ENCODE measurements at regions of chr14 and their contacts with region 1.

Region 1: DNA sequence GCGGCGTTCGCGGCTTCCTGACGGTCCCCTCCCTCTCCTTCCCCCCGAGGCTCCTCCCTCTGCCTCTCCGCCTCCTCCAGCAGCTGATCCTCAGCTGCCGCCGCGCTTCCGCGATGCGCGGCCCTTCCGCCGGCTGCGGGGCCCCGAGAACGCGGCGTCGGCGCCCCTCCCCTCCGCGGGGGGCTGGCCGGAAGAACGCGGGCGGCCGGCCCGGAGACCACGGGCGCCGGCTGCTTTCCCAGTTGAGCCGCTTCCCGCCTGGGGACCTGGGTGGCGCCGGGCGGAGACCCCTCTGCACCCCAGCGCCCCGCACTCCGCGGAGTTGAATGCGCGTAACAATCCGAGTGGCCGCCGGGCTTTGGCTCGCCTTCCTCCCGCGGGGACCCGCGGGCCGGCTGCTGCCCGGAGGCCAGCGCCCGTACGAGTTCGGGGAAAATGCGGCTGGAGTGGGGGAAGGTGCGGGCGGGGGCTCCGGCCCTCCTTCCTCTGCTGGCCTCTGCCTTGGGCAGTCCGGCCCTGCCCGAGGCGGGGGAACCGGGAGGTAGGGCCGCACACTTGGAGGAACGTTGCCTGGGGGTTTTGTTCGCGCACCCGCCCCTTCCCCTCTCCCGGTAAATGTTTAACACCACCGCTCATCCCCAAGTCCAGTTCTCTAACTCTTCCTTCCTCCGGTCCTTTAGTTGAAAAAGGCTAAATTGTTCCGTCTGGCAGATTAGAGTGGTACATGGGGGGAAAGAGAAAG is 383 bp upstream of the DCAF5 start:
- DNase-seq: peak; percentile 89 to 96 (median 92)
- H3K4me3 ChIP-seq: peak overlapping the region; percentile 94
- H3K4me3 Mint-ChIP-seq: peak overlapping the region; percentile 93 to 98 (median 96)
- H3K27ac ChIP-seq: peak overlapping the region; percentile 41
- H3K27ac Mint-ChIP-seq: peak overlapping the region; percentile 68 to 98 (median 94)
- H3K4me1 ChIP-seq: peaks cover 29% of the 10 kb centered on the region
- H3K4me1 Mint-ChIP-seq: peaks cover 33 to 41% (median 36%) of the 10 kb centered on the region in 3 donors
- H3K27me3 ChIP-seq: no peaks in the 10 kb centered on the region
- H3K27me3 Mint-ChIP-seq: no peaks in the 10 kb centered on the region

Region 2: GRCh38 chr14:69129264-69129880 is 23.9 kb before region 1 on chr14:
- CTCF ChIA-PET with region 1: interaction called, 10 read pairs
- POLR2A ChIA-PET with region 1: interaction called, 4 read pairs
- DNase-seq: peak; percentile 53 to 81 (median 55)
- H3K4me3 ChIP-seq: no peak overlapping the region
- H3K4me3 Mint-ChIP-seq: peak overlapping the region in 1 of 7 donors; percentile 10
- H3K27ac ChIP-seq: no peak overlapping the region
- H3K27ac Mint-ChIP-seq: peak overlapping the region; percentile 7 to 87 (median 74)
- H3K4me1 ChIP-seq: peaks cover 29% of the 10 kb centered on the region
- H3K4me1 Mint-ChIP-seq: peaks cover 65 to 93% (median 89%) of the 10 kb centered on the region in 3 donors
- H3K27me3 ChIP-seq: no peaks in the 10 kb centered on the region
- H3K27me3 Mint-ChIP-seq: no peaks in the 10 kb centered on the region

Region 3: DNA sequence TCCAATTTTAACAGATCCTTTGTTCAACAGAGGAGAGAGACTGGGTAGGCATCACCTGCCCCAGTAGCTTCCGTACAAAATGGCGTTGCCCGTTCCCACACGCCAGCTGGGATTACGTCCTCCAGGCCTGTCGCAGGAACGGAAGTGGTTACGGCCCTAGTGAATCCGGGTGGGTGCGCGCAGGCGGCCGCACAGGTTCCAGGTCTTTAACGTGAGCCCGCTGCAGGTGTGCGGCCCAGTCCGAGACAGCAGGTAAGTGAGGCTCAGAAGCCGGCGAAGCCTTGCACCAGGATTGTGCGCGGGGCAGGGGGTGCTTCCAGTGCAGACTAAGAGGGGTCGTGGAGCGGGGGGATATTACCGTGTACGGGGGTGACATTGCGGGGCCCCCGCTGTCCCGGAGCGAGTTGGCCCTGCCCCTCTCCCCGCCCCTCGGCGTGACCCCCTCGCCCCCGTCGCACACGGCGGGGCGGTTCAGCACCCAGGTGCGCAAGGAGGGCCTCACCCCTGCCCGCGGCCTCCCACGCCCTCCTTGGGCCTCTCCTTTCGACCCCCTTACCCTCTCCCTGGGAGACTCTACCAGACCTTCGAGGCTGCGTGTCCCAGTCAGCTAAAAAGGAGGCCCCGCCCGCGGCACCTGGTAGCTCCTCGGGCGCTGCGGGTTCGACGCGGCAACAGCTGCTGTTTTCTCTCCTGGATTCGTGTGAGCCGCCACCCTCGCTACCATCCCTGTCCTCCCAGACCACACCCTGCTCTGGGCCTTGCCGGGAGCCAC is 38.2 kb after region 1 on chr14 and contains the start of gene EXD2:
- CTCF ChIA-PET with region 1: interaction called, 15 read pairs
- POLR2A ChIA-PET with region 1: interaction called, 24 read pairs
- DNase-seq: peak; percentile 21 to 77 (median 63)
- H3K4me3 ChIP-seq: peak within 1 kb of the TSS; percentile 67
- H3K4me3 Mint-ChIP-seq: peak within 1 kb of the TSS; percentile 90 to 97 (median 95)
- H3K27ac ChIP-seq: peak within 1 kb of the TSS; percentile 69
- H3K27ac Mint-ChIP-seq: peak within 1 kb of the TSS; percentile 71 to 96 (median 90)
- H3K4me1 ChIP-seq: no peaks in the 10 kb centered on the region
- H3K4me1 Mint-ChIP-seq: peaks cover 18 to 29% (median 23%) of the 10 kb centered on the region in 3 donors
- H3K27me3 ChIP-seq: no peaks in the 10 kb centered on the region
- H3K27me3 Mint-ChIP-seq: peaks cover 1 to 5% of the 10 kb centered on the region in 2 donors
- total RNA-seq, gene EXD2: 11.6 to 12.5 TPM

Region 4: DNA sequence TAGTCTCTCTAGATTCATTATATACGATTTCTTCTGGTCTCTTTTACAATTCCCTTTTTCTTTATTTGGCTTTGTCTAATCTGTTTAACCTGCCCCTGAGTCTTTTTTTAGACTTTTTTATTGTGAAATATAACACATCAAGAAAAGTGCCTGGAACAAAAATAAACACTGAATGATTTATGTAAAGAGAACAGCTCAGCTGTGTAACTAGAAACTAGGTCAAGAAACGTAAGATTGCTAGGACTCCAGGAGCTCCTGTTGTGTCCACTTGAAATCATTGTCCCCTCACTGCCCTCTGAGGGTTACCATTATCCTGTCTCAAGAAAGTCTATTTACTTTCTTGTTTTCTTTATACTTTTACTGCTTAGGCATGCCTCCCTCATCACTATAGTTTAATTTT is 61.1 kb after region 1 on chr14:
- CTCF ChIA-PET with region 1: no interaction called
- POLR2A ChIA-PET with region 1: no interaction called
- DNase-seq: no peak
- H3K4me3 ChIP-seq: no peak overlapping the region
- H3K4me3 Mint-ChIP-seq: no peak overlapping the region
- H3K27ac ChIP-seq: no peak overlapping the region
- H3K27ac Mint-ChIP-seq: peak overlapping the region in 1 of 8 donors; percentile 53
- H3K4me1 ChIP-seq: no peaks in the 10 kb centered on the region
- H3K4me1 Mint-ChIP-seq: no peaks in the 10 kb centered on the region
- H3K27me3 ChIP-seq: no peaks in the 10 kb centered on the region
- H3K27me3 Mint-ChIP-seq: no peaks in the 10 kb centered on the region

Region 5: DNA sequence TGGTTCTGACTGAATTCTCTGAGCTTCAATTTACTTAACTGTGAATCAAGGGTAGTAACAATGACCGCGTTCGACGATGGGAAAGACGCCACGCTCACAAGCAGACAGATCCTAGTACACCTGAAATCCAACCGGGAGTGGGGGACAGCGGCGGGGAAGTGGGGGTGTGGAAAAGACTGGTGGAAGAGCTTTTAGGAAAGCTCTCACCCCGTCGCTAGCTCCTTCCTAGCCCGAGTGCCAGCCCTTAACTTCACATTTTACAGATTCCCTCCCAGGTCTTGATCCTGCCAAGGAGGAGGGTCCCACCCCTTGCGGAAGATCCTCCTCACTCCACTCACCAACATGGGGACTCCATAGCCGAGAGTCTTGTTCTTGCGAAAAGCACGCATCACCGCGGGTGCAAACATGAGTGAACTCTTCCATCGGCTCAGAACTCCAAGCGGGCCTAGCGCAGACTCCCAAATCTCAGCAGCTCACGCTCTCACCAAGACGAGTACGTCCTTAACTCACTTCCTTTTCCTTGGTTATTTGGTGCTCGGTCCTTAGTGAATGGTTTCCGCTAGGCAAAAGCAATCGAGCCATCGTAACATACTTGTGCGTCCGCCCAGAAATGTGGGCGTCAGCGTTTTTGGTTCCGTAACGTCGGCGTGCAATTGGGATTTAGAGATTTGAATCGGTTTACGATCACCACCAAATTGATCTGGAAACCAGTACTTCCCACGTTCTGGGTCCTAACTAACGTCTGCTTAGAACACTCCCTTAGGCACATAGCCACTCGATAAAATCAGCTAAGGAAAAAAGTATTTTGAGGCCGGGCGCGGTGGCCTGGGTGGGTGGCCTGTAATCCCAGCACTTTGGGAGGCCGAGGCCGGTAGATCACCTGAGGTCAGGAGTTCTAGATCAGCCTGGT is 1206.1 kb after region 1 on chr14 and contains the start of gene COX16:
- CTCF ChIA-PET with region 1: interaction called, 3 read pairs
- POLR2A ChIA-PET with region 1: interaction called, 14 read pairs
- DNase-seq: peak; percentile 59 to 82 (median 76)
- H3K4me3 ChIP-seq: peak within 1 kb of the TSS; percentile 98
- H3K4me3 Mint-ChIP-seq: peak within 1 kb of the TSS; percentile 97 to 100 (median 99)
- H3K27ac ChIP-seq: peak within 1 kb of the TSS; percentile 54
- H3K27ac Mint-ChIP-seq: peak within 1 kb of the TSS; percentile 74 to 99 (median 96)
- H3K4me1 ChIP-seq: peaks cover 43% of the 10 kb centered on the region
- H3K4me1 Mint-ChIP-seq: peaks cover 46 to 53% (median 51%) of the 10 kb centered on the region in 3 donors
- H3K27me3 ChIP-seq: no peaks in the 10 kb centered on the region
- H3K27me3 Mint-ChIP-seq: peaks cover 0 to 2% of the 10 kb centered on the region in 2 donors
- total RNA-seq, gene COX16: 88.5 to 90.0 TPM

Measured in CD8-positive, alpha-beta memory T cell (primary cell).